B cell (primary cell): ENCODE measurements at regions of chr1 and their contacts with region 1.

Region 1: GRCh38 chr1:15128520-15129313 is 24.8 kb upstream of the TMEM51 start:
- DNase-seq: peak; percentile 66
- ATAC-seq: peak; percentile 81
- H3K4me3 ChIP-seq: no peak overlapping the region
- H3K4me3 Mint-ChIP-seq: no peak overlapping the region
- H3K27ac ChIP-seq: no peak overlapping the region
- H3K27ac Mint-ChIP-seq: no peak overlapping the region
- H3K4me1 ChIP-seq: no peaks in the 10 kb centered on the region
- H3K4me1 Mint-ChIP-seq: no peaks in the 10 kb centered on the region
- H3K27me3 ChIP-seq: peaks cover 0 to 11% (median 4%) of the 10 kb centered on the region in 4 experiments
- H3K27me3 Mint-ChIP-seq: peaks cover 15% of the 10 kb centered on the region
- CTCF ChIP-seq: peak; percentile 89

Region 2: DNA sequence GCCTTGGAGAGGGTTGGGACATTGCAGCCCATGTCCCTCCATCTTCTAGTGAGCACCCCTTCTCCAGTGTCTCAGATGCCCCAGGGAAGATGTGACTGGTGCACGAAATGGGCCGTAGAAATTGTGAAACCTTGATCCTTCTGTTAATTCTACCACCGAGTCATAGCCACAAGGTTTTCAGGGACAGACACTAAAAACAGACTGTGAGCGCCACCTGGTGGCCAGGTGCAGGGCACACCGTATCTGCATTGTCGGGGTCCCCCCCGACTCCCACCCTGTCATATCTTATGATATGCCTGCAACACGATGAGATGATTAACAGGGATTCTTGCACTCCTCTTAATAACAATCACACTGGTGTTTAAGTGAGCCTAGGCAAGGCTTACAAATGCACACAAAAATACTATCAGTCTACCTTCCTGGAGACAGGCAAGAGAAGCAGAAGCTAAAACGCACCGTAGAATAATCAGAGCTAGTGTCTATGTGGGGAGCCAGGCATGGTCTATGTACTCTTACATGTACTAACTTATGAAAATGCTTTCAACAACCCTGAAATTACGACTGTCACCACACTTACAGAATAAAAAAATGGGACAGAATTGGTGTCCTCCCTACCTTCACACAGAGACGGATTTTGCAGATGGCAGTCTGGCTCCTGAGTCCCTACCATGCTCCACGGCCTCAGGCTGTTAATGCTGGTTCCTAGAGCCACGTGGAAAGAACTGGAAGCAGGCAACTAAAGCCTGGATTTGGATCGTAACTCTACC is 176.2 kb after region 1 on chr1:
- CTCF ChIA-PET with region 1: interaction called, 21 read pairs
- POLR2A ChIA-PET with region 1: no interaction called
- intact Hi-C with region 1: no loop called
- DNase-seq: peak; percentile 65
- ATAC-seq: peak; percentile 36
- H3K4me3 ChIP-seq: no peak overlapping the region
- H3K4me3 Mint-ChIP-seq: no peak overlapping the region
- H3K27ac ChIP-seq: no peak overlapping the region
- H3K27ac Mint-ChIP-seq: no peak overlapping the region
- H3K4me1 ChIP-seq: no peaks in the 10 kb centered on the region
- H3K4me1 Mint-ChIP-seq: no peaks in the 10 kb centered on the region
- H3K27me3 ChIP-seq: no peaks in the 10 kb centered on the region
- H3K27me3 Mint-ChIP-seq: peaks cover 7% of the 10 kb centered on the region
- CTCF ChIP-seq: peak; percentile 84